ENCODE measurements at regions of chr5 and their contacts with region 1.

Region 1: GRCh38 chr5:119340597-119341218 is 15.1 kb upstream of the TNFAIP8 start:
- DNase-seq: peak; percentile 96
- H3K4me3 ChIP-seq: peak overlapping the region; percentile 70
- H3K27ac ChIP-seq: peak overlapping the region; percentile 99
- H3K4me1 ChIP-seq: peaks cover 97% of the 10 kb centered on the region
- CTCF ChIP-seq: peak; percentile 43; the same call in 1 of the 2 replicates

Region 2: GRCh38 chr5:119031905-119032304 is 308.8 kb before region 1 on chr5:
- CTCF ChIA-PET with region 1: no interaction called
- POLR2A ChIA-PET with region 1: interaction called, 6 read pairs
- intact Hi-C with region 1: loop called (anchors 2 kb)
- DNase-seq: peak; percentile 76
- H3K4me3 ChIP-seq: peak overlapping the region; percentile 44
- H3K27ac ChIP-seq: peak overlapping the region; percentile 97
- H3K4me1 ChIP-seq: peaks cover 69% of the 10 kb centered on the region
- CTCF ChIP-seq: no peak

Region 3: DNA sequence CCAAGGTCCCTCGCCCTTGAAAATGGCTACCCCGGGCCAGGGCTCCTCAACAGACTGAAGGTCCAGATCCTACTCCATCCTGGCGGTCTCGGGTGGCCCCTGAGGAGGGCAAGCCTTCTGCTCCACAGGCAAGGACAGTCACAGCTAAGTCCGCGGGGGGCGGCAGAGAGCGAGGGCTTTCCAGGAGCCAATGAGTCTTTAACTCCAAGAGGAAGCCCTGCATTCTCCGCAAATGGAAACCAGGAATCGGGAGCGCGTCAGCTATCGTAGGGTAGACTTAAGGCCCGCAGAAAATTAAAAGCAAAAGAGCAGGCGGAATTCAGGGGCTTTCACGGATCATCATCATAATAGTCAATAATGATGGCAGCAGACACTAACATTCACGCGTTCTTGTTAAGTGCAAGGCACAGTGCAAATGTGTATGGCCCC is 72.7 kb before region 1 on chr5:
- CTCF ChIA-PET with region 1: interaction called, 3 read pairs
- POLR2A ChIA-PET with region 1: interaction called, 46 read pairs
- intact Hi-C with region 1: no loop called
- DNase-seq: peak; percentile 84
- H3K4me3 ChIP-seq: peak overlapping the region; percentile 84
- H3K27ac ChIP-seq: peak overlapping the region; percentile 60
- H3K4me1 ChIP-seq: peaks cover 45% of the 10 kb centered on the region
- CTCF ChIP-seq: 0 out of 2 replicates have a peak, but pooled peaks have one; percentile 34

Region 4: GRCh38 chr5:119309326-119309725 is 31.4 kb before region 1 on chr5:
- CTCF ChIA-PET with region 1: interaction called, 6 read pairs
- POLR2A ChIA-PET with region 1: interaction called, 286 read pairs
- intact Hi-C with region 1: loop called (anchors 1 kb)
- DNase-seq: peak; percentile 79
- H3K4me3 ChIP-seq: peak overlapping the region; percentile 54
- H3K27ac ChIP-seq: peak overlapping the region; percentile 95
- H3K4me1 ChIP-seq: peaks cover 98% of the 10 kb centered on the region
- CTCF ChIP-seq: no peak

Region 5: DNA sequence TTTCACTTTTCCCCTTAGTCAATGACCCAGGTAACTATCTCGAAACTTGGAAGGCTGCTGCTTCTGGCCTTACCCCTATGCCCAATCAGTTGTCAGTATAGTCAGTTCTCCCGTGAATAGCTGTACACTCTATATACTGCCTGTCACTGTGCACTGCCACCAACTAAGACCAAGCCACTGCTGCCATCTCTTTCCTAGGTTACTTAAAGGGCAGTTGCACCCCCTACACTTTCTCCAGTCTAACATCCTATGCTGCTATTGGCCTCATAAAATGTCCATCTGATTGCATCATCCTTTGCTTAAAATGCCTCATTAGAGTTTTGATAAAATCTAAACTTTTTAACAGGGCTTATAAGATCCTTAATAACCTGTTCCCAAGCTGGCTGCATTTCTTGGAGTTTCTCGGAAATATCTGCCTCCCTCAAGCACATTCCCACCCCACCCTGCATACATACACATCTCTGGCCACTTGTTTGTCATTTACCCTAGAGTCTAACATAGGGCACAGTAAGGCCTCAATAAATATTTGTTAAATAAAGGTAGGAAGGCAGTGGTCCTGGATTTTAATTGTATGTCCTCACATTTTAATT is 17.7 kb before region 1 on chr5:
- CTCF ChIA-PET with region 1: interaction called, 3 read pairs
- POLR2A ChIA-PET with region 1: interaction called, 538 read pairs
- intact Hi-C with region 1: no loop called
- DNase-seq: no peak
- H3K4me3 ChIP-seq: no peak overlapping the region
- H3K27ac ChIP-seq: no peak overlapping the region
- H3K4me1 ChIP-seq: peaks cover 90% of the 10 kb centered on the region
- CTCF ChIP-seq: no peak

Region 6: DNA sequence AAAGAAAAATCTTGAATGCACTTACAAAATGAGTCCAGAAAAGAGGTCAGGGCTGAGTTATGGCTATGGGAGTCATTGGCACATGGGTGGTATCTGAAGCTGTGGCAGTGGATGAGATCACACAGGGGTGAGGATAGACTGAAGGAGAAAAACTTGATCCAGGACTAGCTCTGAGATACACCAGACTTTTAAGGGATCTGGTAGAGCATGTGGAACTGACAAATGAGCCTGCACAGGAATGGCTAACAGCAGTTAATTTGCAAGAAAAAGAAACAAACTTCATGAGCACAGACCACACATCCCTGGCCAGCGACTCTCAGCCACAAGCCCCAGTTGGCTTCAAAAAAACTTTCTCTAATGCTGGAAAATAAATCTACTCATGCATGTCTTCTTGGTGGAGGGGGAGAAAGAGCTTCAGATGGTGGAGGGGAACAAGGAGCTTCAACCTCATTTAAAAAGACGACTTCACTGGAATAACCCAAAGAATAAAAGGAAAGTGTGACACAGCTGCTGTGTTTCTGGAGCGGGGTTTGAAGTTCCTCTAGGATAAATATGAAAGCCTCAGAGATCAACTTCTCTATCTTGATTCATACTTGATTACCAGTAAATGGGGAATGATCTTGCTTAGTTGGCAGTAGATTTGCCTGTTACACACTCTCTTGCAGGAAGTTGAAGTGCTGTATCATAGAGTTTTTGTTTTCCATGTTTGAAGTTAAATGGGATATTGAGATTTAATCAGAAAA is 48.8 kb after region 1 on chr5:
- CTCF ChIA-PET with region 1: no interaction called
- POLR2A ChIA-PET with region 1: interaction called, 13 read pairs
- intact Hi-C with region 1: no loop called
- DNase-seq: no peak
- H3K4me3 ChIP-seq: peak overlapping the region; percentile 17
- H3K27ac ChIP-seq: peak overlapping the region; percentile 67
- H3K4me1 ChIP-seq: peaks cover 87% of the 10 kb centered on the region
- CTCF ChIP-seq: no peak

Region 7: DNA sequence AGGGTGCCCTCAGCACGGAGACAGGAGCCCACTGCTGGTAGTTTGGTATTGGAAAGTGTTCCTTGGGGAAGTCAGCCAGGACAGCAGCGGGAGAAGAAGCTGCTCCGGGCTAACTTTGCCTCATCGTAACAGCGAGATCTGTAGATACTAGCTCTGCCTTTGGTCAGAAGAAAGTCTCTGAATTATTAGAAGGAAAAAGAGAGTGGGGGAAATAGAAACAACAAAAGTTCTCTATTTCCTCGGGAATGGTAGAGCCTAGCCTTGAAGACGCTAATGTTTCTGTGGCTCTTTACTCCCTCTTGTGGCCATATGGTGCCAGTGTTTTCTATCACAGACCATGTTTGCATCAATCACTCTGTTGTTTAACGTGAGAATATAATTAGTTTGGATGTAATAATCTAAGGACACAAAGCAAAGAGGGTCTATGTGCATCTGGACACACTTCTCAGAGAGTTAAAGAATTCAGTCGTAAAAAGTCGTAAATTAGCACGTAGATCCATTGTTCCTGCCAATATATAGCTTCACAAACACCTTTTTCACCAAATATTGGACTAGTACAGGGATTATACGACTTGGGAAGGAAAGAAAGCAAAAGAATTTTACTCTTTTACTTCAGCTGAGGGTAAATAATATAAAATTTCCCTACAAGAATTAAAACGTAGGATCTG is 71.4 kb after region 1 on chr5:
- CTCF ChIA-PET with region 1: interaction called, 3 read pairs
- POLR2A ChIA-PET with region 1: interaction called, 7 read pairs
- intact Hi-C with region 1: loop called (anchors 2 kb)
- DNase-seq: peak; percentile 79
- H3K4me3 ChIP-seq: peak overlapping the region; percentile 55
- H3K27ac ChIP-seq: no peak overlapping the region
- H3K4me1 ChIP-seq: peaks cover 37% of the 10 kb centered on the region
- CTCF ChIP-seq: peak; percentile 99

Region 8: GRCh38 chr5:119435436-119436132 is 94.9 kb after region 1 on chr5:
- CTCF ChIA-PET with region 1: no interaction called
- POLR2A ChIA-PET with region 1: no interaction called
- intact Hi-C with region 1: no loop called
- DNase-seq: peak; percentile 80
- H3K4me3 ChIP-seq: no peak overlapping the region
- H3K27ac ChIP-seq: no peak overlapping the region
- H3K4me1 ChIP-seq: no peaks in the 10 kb centered on the region
- CTCF ChIP-seq: peak; percentile 92